Activated B cell treated with CpG ODN at 0.5 μM for 24 hours (primary cell): ENCODE measurements at regions of chr7 and their contacts with region 1.

Region 1: DNA sequence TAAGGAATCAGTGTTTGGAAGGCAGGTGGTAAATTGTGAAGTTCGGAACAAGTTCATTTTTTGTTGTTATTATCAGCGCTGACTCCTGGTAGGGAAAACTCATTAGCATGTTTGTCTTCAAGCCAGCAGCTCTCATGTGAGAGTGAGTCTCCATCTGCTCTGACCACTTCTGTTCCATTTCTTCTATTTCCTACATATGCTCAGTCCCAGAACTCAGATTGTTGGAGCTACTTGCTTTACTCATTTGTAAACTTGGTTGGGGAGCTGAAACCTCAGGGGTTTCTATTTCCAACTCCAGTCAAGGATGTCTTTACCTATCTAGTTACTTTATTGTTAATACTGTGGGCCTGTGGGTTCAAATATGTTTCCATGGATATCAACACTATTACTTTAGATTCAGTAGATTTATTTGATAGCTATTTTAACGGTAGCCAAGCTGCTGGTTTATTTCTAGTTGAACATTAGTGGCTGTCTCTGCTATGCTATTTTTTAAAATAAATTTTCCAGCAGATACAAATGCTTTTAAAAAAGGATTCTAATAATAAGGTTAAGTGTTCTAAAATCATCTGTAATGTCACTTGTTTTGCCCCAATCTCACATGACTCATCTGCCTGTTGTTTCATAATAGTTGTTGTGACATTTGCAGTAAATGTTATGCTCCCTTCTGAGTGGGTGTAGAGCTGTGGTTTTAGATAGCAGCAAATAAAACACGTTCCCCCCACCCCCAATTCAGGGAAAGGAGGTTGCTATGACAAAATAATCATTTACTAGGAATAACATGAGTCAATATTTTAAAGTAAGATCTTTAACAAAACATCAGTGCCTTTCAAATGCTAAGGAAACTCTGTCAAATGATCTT is 143.3 kb downstream of the HDAC9 start:
- DNase-seq: no peak
- ATAC-seq: no peak
- H3K4me3 Mint-ChIP-seq: no peak overlapping the region
- H3K27ac Mint-ChIP-seq: no peak overlapping the region
- H3K4me1 Mint-ChIP-seq: no peaks in the 10 kb centered on the region
- H3K27me3 Mint-ChIP-seq: no peaks in the 10 kb centered on the region
- CTCF ChIP-seq: no peak

Region 2: GRCh38 chr7:18597754-18598153 is 41.1 kb before region 1 on chr7:
- CTCF ChIA-PET with region 1: no interaction called
- POLR2A ChIA-PET with region 1: no interaction called
- intact Hi-C with region 1: loop called (anchors 5 kb)
- DNase-seq: no peak
- ATAC-seq: no peak
- H3K4me3 Mint-ChIP-seq: no peak overlapping the region
- H3K27ac Mint-ChIP-seq: no peak overlapping the region
- H3K4me1 Mint-ChIP-seq: peaks cover 10% of the 10 kb centered on the region
- H3K27me3 Mint-ChIP-seq: no peaks in the 10 kb centered on the region
- CTCF ChIP-seq: no peak

Region 3: DNA sequence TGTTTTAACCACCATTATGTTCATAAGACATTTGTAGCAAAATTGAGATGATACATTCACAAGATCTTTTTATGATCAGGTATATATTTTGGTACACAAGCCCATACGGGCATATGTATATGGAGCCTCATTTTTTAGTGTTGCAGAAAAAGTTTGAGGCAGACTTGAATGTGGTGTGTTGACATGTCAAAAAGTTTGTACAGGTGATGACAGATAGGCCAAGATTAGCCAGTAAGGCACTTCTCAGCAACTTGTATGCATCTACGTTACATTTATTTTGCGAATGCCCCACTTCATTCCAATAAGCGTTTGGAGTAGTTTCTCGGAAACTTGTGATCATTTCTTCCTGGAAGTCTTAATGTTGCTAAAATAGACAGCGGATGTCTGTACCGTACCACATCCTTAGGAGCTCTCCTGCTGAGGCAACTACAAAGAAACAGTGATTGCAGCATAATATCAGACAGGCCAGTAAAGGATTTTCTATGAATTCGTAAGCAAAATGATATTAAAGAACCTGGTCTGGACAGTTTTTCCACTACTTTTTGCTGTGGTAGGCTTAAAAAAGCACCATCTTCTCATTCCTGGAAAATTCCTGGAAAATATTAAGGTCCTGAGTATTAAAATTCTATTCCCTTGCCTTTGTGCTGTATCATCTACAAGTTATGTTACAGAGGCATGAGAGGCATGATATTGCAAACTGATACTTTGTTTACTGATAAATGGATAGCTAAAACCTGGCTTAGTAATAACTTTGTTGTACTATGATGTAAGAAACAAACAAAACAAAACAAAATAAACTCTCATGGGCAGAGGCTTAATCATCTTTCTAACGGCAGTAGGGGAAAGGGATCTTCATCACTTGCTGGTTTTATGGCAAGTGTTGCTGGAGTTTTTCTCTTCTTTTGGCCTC is 10.3 kb after region 1 on chr7:
- CTCF ChIA-PET with region 1: no interaction called
- POLR2A ChIA-PET with region 1: no interaction called
- intact Hi-C with region 1: loop called (anchors 2 kb)
- DNase-seq: no peak
- ATAC-seq: no peak
- H3K4me3 Mint-ChIP-seq: no peak overlapping the region
- H3K27ac Mint-ChIP-seq: no peak overlapping the region
- H3K4me1 Mint-ChIP-seq: no peaks in the 10 kb centered on the region
- H3K27me3 Mint-ChIP-seq: no peaks in the 10 kb centered on the region
- CTCF ChIP-seq: no peak

Region 4: GRCh38 chr7:18829858-18830285 is 191.0 kb after region 1 on chr7:
- CTCF ChIA-PET with region 1: no interaction called
- POLR2A ChIA-PET with region 1: no interaction called
- intact Hi-C with region 1: no loop called
- DNase-seq: no peak
- ATAC-seq: no peak
- H3K4me3 Mint-ChIP-seq: no peak overlapping the region
- H3K27ac Mint-ChIP-seq: no peak overlapping the region
- H3K4me1 Mint-ChIP-seq: no peaks in the 10 kb centered on the region
- H3K27me3 Mint-ChIP-seq: no peaks in the 10 kb centered on the region
- CTCF ChIP-seq: no peak